ENCODE measurements at regions of chr6 and their contacts with region 1.

Region 1: DNA sequence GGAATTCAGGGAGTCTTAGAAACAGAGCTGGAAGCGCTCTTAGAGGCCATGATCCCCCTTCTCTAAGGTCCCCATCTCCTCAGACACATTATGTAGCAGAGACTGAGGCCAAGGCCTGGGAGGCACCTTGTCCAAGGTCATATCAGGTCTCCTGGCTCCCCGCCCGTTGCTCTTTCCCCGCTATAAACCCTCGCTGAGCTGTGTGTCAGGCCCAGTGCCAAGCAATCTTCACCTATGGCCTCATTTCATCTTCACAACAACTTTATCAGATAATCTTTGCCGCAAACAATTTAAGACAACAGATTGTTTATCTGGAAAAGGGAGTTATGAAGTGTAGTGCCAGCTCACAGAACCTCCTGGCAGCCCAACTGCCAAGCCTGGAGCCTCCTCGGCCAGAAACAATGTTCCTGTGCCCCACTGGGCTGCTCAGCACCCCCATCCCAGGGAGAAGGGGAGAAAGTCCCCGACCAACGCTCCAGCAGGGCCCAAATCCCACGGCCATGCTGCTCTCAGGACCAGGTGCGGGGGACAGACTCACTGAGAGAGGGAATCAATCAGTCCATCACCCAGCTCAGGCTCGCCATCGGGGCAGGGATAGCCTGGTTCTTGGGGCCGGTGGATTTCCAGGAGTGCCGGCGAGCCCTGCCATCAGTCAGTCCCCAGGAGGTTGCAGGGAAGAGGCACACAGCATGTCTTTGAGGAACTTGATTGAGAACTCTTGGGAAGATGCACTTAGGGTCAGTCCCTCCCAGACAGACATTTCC is 16.9 kb upstream of the FANCE start:
- DNase-seq: no peak
- H3K4me3 ChIP-seq: no peak overlapping the region
- H3K27ac ChIP-seq: no peak overlapping the region
- H3K4me1 ChIP-seq: peaks cover 0 to 2% of the 10 kb centered on the region in 2 experiments; a peak in 1 of 4 replicates
- H3K27me3 ChIP-seq: no peaks in the 10 kb centered on the region
- CTCF ChIP-seq: no peak
- EP300 ChIP-seq: no peak
- RAD21 ChIP-seq: no peak

Region 2: DNA sequence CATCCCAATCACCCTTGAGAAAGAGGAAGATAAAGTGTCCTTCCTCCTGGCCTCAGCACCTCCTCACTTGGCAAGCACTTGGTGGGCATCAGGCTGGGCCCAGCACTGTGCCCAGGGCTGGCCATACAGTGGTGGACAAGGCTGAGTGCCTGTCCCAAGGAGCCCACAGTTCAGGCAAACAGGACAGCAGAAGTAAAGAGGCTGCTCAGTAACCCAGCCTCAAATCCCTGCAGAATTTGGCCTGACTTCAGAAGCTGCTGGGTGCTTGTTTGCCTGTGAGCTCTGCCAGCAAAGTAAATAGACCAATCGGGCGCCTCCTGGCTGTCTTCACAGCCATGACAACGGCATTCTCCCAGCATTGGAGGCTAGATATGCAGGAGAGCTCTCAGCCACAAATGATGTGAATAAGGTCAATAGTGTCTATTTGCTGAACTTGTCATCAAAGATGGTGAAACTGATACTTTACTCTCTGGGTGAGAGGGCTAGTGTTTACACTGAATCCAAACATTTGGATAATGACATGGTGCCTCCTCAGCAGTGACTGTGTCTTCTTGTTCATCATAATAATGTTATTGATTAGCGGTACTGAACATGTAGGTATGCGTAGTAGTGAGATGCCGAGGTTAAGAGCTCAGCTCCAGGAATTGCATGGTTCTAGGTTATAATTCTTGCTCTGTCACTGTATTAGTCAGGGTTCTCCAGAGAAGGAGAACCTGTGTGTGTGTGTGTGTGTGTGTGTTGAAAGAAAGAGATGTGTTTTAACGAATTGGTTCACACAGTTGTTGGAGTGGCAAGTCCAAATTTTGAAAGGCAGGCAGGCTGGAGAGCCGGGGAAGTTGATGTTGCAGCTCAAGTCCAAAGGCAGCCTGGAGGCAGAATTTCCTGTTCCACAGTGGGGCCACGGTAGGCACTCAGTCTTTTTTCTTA is 19.9 kb before region 1 on chr6:
- CTCF ChIA-PET with region 1: interaction called, 11 read pairs
- POLR2A ChIA-PET with region 1: no interaction called
- DNase-seq: peak; percentile 63
- H3K4me3 ChIP-seq: no peak overlapping the region; a peak in 1 of 4 replicates
- H3K27ac ChIP-seq: peak overlapping the region in 1 of 2 experiments; percentile 36; a peak in 3 of 4 replicates
- H3K4me1 ChIP-seq: peaks cover 0 to 31% of the 10 kb centered on the region in 2 experiments; a peak in 2 of 4 replicates
- H3K27me3 ChIP-seq: no peaks in the 10 kb centered on the region
- CTCF ChIP-seq: peak; percentile 69
- EP300 ChIP-seq: no peak
- RAD21 ChIP-seq: peak; percentile 64